PC-9 (cell line): ENCODE measurements at regions of chr15 and their contacts with region 1.

Region 1: GRCh38 chr15:92958105-92958504 is 58.0 kb downstream of the CHD2 start:
- DNase-seq: no peak
- H3K4me3 ChIP-seq: no peak overlapping the region
- H3K27ac ChIP-seq: no peak overlapping the region
- H3K4me1 ChIP-seq: no peaks in the 10 kb centered on the region
- H3K27me3 ChIP-seq: no peaks in the 10 kb centered on the region
- CTCF ChIP-seq: no peak

Region 2: DNA sequence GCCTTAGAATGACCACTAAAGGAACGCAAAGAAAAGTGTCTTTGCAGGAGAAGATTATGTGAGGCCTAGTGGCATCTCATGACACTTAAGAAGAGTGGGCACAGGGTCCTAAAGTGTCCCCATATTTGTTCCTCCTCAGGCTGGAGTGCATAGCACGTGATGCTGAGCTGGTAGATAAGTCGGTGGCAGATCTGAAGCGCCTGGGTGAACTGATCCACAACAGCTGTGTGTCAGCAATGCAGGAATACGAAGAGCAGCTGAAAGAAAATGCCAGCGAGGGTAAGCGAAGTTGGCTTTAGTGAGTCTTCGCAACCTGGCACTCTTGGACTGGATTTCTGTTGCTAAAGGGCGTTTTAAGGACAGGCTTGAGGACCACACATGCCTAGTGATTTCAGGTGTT is 34.6 kb after region 1 on chr15:
- CTCF ChIA-PET with region 1: no interaction called
- POLR2A ChIA-PET with region 1: no interaction called
- intact Hi-C with region 1: loop called (anchors 5 kb)
- DNase-seq: no peak
- H3K4me3 ChIP-seq: no peak overlapping the region
- H3K27ac ChIP-seq: no peak overlapping the region
- H3K4me1 ChIP-seq: no peaks in the 10 kb centered on the region
- H3K27me3 ChIP-seq: no peaks in the 10 kb centered on the region
- CTCF ChIP-seq: no peak